H1 (cell line): ENCODE measurements at regions of chr16 and their contacts with region 1.

Region 1: GRCh38 chr16:73768786-73769203 is 527.8 kb upstream of the PSMD7 start:
- DNase-seq: no peak
- H3K4me3 ChIP-seq: no peak overlapping the region
- H3K27ac ChIP-seq: no peak overlapping the region
- H3K4me1 ChIP-seq: no peaks in the 10 kb centered on the region
- H3K27me3 ChIP-seq: no peaks in the 10 kb centered on the region
- CTCF ChIP-seq: no peak
- EP300 ChIP-seq: no peak
- POLR2A ChIP-seq: no peak
- RAD21 ChIP-seq: no peak

Region 2: GRCh38 chr16:73781297-73781696 is 12.5 kb after region 1 on chr16:
- CTCF ChIA-PET with region 1: interaction called, 12 read pairs
- POLR2A ChIA-PET with region 1: no interaction called
- DNase-seq: no peak
- H3K4me3 ChIP-seq: no peak overlapping the region
- H3K27ac ChIP-seq: no peak overlapping the region
- H3K4me1 ChIP-seq: 0 out of 7 replicates have a peak, but pooled peaks cover 0 to 2% (median 0%) of the 10 kb centered on the region in 4 experiments
- H3K27me3 ChIP-seq: no peaks in the 10 kb centered on the region
- CTCF ChIP-seq: no peak
- EP300 ChIP-seq: no peak
- POLR2A ChIP-seq: no peak
- RAD21 ChIP-seq: no peak